ENCODE measurements at regions of chr2 and their contacts with region 1.

Region 1: GRCh38 chr2:11778923-11779757 is 32.7 kb downstream of the LPIN1 start:
- DNase-seq: no peak
- H3K4me3 ChIP-seq: no peak overlapping the region
- H3K27me3 ChIP-seq: no peaks in the 10 kb centered on the region
- CTCF ChIP-seq: peak; percentile 98

Region 2: GRCh38 chr2:11738589-11739436 is 40.3 kb before region 1 on chr2:
- CTCF ChIA-PET with region 1: interaction called, 15 read pairs
- POLR2A ChIA-PET with region 1: no interaction called
- DNase-seq: peak; percentile 62
- H3K4me3 ChIP-seq: no peak overlapping the region
- H3K27me3 ChIP-seq: no peaks in the 10 kb centered on the region; the same call in 1 of the 2 replicates
- CTCF ChIP-seq: peak; percentile 67

Region 3: GRCh38 chr2:11743846-11744553 is 35.1 kb before region 1 on chr2:
- CTCF ChIA-PET with region 1: interaction called, 15 read pairs
- POLR2A ChIA-PET with region 1: no interaction called
- DNase-seq: peak; percentile 97
- H3K4me3 ChIP-seq: 0 out of 2 replicates have a peak overlapping the region, but pooled peaks have one; percentile 15
- H3K27me3 ChIP-seq: no peaks in the 10 kb centered on the region
- CTCF ChIP-seq: no peak

Region 4: GRCh38 chr2:11764359-11764758 is 14.8 kb before region 1 on chr2:
- CTCF ChIA-PET with region 1: interaction called, 11 read pairs
- POLR2A ChIA-PET with region 1: no interaction called
- DNase-seq: no peak
- H3K4me3 ChIP-seq: no peak overlapping the region
- H3K27me3 ChIP-seq: no peaks in the 10 kb centered on the region
- CTCF ChIP-seq: no peak

Region 5: DNA sequence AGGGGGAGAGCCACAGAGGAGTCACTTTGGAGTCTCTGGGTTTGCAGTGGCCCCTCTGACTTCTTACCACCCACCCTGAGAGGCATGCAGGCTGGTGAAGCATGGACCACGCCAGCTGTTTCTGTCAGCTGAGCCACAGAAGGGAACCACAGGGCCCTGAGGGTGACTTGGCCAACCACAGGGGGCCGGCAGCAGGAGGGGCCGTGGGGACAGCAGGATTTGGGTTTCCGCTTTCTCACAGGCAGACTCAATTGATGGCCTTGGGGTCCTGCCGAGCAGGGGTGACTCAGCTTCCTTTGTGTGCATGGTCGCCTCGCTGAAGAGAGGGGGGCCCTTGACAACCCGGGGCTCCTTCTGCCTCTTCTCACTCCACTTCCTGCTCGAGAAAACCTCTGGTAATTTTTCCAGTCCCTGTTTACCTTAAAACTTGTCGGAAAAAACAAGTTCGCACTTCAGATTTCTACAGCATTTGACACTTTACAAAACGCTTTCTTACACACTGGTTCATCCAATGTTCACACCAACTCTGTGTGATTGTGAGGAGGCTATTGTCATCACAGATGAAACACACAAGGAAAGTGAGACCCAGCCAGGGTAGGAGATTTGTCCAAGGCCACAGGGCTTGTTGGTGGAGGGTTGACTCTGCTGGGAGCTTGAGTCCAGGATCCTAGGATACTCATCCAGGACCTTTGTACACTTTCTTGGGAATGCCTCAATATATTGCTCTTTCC is 278.5 kb after region 1 on chr2:
- CTCF ChIA-PET with region 1: no interaction called
- POLR2A ChIA-PET with region 1: no interaction called
- DNase-seq: no peak
- H3K4me3 ChIP-seq: no peak overlapping the region
- H3K27me3 ChIP-seq: no peaks in the 10 kb centered on the region; the same call in 1 of the 2 replicates
- CTCF ChIP-seq: no peak

Measured in BJ (cell line).